Right cardiac atrium (tissue), 5 donors: ENCODE measurements at regions of chr14 and their contacts with region 1.

Region 1: GRCh38 chr14:100406505-100407131 is 83.5 kb downstream of the SLC25A47 start:
- DNase-seq: no peak
- ATAC-seq: peak; percentile 51 to 66
- H3K4me3 ChIP-seq: no peak overlapping the region
- H3K27ac ChIP-seq: no peak overlapping the region
- H3K4me1 ChIP-seq: peaks cover 7% of the 10 kb centered on the region
- H3K27me3 ChIP-seq: no peaks in the 10 kb centered on the region

Region 2: DNA sequence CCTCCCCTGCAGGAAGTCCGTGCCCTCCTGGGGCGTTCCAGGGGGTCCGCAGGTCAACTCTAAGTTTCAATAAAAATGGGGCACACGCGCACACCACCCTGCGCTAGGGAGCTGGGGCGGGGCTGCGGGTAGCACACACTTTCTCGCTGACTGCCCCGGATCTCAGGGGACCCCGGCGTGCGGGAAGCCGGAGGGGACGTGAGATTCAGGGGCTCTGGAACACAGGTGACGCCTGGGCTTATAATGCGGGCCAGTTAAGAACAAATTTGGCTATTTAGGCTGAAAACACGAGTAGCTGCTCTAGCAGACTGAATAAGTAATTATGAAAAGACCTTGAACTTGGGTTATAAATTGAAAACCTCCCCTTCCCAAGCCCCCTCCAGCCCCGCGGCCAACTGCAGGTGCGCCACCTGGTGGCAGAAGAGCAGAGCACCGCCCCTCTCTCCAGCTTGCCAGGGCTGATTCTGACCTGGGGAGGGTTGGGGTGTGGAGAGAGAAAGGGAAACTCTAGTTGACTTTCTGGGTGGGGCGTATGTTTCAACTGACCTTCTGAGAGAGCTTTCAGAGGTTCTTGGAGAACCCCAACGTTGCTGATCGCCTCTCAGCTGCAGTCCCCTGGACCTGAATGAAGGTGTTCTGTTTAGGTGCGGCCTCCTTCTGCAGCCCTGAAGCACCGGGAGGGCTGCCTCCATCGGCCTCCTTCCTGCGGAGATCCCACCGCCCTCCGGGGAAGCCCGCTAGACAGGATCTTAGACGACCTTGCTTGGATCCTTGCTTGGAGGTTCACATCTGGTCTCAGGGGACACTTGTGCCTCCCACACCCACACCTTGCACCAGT is 459.7 kb before region 1 on chr14:
- intact Hi-C with region 1: no loop called
- DNase-seq: peak in 2 of 3 donors; percentile 63 to 73
- ATAC-seq: peak; percentile 55 to 73
- H3K4me3 ChIP-seq: no peak overlapping the region
- H3K27ac ChIP-seq: no peak overlapping the region
- H3K4me1 ChIP-seq: no peaks in the 10 kb centered on the region
- H3K27me3 ChIP-seq: no peaks in the 10 kb centered on the region

Region 3: DNA sequence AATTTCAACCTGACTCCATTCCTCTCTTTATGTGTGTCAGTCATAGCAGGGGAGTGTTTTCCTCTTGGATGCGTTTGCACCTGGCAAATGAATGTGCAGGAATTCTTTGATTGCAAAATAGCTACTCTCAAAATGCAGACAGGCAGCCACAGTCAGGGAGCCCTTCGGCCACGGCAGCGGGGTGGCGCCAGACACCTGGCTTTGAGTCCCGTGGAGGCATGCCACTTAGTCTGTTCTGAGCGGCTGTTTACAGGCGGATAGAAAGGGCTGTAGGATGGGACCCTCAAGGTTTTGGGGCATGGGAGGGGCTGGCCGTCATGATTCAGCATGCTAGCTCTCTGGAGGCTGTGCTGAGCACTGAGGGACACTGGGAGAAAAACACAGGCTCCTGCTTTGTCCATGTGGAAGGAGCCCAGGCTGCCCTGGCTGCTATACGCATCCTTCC is 33.6 kb after region 1 on chr14:
- intact Hi-C with region 1: no loop called
- DNase-seq: peak; percentile 62 to 87 (median 85)
- ATAC-seq: peak; percentile 82 to 86
- H3K4me3 ChIP-seq: no peak overlapping the region
- H3K27ac ChIP-seq: peak overlapping the region; percentile 71
- H3K4me1 ChIP-seq: peaks cover 2% of the 10 kb centered on the region
- H3K27me3 ChIP-seq: no peaks in the 10 kb centered on the region

Region 4: DNA sequence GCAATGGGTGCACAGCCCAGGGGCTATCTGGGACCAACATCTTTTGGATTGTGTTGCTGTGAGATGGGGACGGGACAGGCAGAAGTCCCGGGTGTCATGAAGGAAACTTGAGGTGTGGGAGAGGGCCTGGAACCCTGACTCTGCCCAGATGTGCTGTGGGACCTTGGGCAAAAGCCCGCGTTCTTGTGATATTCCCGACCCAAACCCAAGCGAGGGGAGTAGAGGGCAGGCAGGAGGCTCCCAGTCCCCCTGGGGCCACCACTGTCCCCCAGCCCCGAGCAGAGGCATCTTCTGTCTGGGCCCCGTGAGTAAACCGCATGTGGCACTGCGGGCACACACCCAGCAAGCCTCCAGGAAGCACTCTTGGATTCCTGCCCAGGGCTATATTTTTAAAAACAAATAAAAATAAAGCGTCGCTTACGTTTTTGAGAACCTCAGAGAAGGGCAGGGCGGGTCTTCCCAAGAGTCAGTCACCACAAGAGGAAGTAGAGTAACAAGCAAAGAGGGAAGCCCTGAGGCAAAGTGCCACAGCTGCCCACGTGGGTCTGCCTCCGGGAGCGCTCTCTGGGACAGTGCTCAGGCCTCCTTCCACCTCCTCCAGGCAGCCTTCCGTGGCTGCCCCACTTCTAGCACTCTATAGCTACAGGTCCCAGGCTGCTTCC is 141.1 kb after region 1 on chr14:
- intact Hi-C with region 1: loop called in 1 of 4 experiments (anchors 10 kb)
- DNase-seq: peak; percentile 55 to 84 (median 82)
- ATAC-seq: peak; percentile 38 to 50
- H3K4me3 ChIP-seq: no peak overlapping the region
- H3K27ac ChIP-seq: no peak overlapping the region
- H3K4me1 ChIP-seq: no peaks in the 10 kb centered on the region
- H3K27me3 ChIP-seq: no peaks in the 10 kb centered on the region